PC-3 (cell line): ENCODE measurements at regions of chr7 and their contacts with region 1.

Region 1: GRCh38 chr7:138992052-138992531 is 10.9 kb upstream of the KIAA1549 start:
- DNase-seq: no peak
- ATAC-seq: no peak
- H3K4me3 ChIP-seq: no peak overlapping the region
- H3K27ac ChIP-seq: no peak overlapping the region
- H3K4me1 ChIP-seq: no peaks in the 10 kb centered on the region
- H3K27me3 ChIP-seq: no peaks in the 10 kb centered on the region
- CTCF ChIP-seq: no peak

Region 2: DNA sequence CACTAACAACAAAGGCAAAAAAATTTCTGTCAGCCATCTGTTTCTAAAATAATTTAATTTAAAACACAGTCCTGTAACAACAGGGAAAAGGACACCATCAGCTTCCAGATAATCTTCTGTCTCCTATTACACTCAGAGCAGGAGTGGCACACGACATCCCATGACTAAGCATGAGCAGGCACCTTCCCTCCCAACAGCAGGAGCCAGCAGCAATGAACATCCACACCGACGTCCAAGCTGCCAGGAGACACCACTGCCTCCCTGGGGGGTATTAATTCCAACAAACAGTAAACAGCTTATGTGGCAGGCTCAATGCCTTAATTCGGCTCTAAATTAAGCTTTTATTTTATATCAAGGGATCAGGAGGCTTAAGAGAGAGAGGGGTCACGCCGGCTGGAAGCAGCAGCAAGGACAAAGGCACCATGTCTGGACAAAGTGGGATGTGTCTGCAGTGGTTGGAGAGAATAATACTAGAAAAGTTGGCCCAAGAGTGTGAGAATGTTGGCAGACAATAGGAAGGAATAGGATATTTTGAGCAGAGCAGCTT is 56.6 kb before region 1 on chr7:
- CTCF ChIA-PET with region 1: no interaction called
- POLR2A ChIA-PET with region 1: no interaction called
- intact Hi-C with region 1: no loop called
- DNase-seq: peak; percentile 92
- ATAC-seq: peak; percentile 93
- H3K4me3 ChIP-seq: peak overlapping the region; percentile 49; the same call in 1 of the 2 replicates
- H3K27ac ChIP-seq: peak overlapping the region; percentile 91
- H3K4me1 ChIP-seq: peaks cover 32% of the 10 kb centered on the region
- H3K27me3 ChIP-seq: no peaks in the 10 kb centered on the region
- CTCF ChIP-seq: no peak

Region 3: GRCh38 chr7:138948108-138948802 is 43.8 kb before region 1 on chr7:
- CTCF ChIA-PET with region 1: no interaction called
- POLR2A ChIA-PET with region 1: no interaction called
- intact Hi-C with region 1: no loop called
- DNase-seq: peak; percentile 59
- ATAC-seq: peak; percentile 64; the same call in 1 of the 2 replicates
- H3K4me3 ChIP-seq: no peak overlapping the region
- H3K27ac ChIP-seq: peak overlapping the region; percentile 87
- H3K4me1 ChIP-seq: peaks cover 9% of the 10 kb centered on the region
- H3K27me3 ChIP-seq: no peaks in the 10 kb centered on the region
- CTCF ChIP-seq: no peak

Region 4: DNA sequence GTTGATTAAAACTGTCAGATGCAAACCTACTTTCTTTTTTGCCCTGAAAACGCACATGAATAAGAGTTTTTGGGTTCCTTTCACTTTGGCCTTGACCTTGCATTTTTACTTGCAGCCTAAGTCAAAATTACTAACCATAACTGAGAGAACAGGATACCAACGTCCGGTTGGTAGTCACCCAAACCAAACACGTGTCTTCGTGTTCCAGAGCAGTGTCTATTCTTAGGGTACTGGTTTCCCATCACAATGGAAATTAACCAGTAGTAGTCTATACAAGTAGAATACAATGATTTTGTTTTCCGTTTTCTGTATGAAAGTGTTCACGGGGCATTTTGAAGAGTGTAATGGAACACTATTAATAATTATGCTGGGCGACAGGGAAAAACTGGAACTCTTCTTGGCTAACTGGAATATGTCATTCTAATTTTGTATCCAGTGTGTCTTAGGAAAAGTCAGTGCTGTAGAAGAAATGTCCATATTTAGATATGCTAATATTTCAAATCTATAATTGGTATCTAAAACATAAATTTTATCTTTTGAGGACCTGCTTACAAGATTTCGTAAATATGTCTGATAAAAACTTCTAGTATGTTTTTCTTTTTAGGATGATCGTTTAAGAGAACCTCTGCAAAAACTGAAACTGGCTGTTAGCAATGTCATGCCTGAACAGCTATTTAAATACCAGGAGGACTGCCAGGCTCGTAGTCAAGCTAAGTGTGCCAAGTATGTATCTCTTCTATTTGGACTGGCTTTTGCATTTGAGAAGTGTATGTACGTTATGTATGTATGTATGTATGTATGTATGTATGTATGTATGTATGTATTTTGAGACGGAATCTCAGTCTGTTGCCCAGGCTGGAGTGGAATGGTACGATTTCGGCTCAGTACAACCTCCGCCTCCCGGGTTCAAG is 279.9 kb after region 1 on chr7:
- CTCF ChIA-PET with region 1: no interaction called
- POLR2A ChIA-PET with region 1: interaction called, 11 read pairs
- intact Hi-C with region 1: no loop called
- DNase-seq: no peak
- ATAC-seq: no peak
- H3K4me3 ChIP-seq: no peak overlapping the region
- H3K27ac ChIP-seq: no peak overlapping the region
- H3K4me1 ChIP-seq: no peaks in the 10 kb centered on the region
- H3K27me3 ChIP-seq: no peaks in the 10 kb centered on the region
- CTCF ChIP-seq: no peak